ENCODE measurements at regions of chrX and their contacts with region 1.

Region 1: GRCh38 chrX:129925305-129926092 is 19.5 kb downstream of the UTP14A start:
- DNase-seq: peak; percentile 63 to 64
- H3K4me3 ChIP-seq: no peak overlapping the region
- H3K27ac ChIP-seq: peak overlapping the region; percentile 27
- H3K4me1 ChIP-seq: peaks cover 10% of the 10 kb centered on the region
- H3K27me3 ChIP-seq: no peaks in the 10 kb centered on the region
- CTCF ChIP-seq: peak; percentile 83

Region 2: GRCh38 chrX:129798888-129799287 is 126.6 kb before region 1 on chrX:
- CTCF ChIA-PET with region 1: no interaction called
- POLR2A ChIA-PET with region 1: no interaction called
- intact Hi-C with region 1: no loop called
- DNase-seq: no peak
- H3K4me3 ChIP-seq: no peak overlapping the region
- H3K27ac ChIP-seq: no peak overlapping the region
- H3K4me1 ChIP-seq: no peaks in the 10 kb centered on the region
- H3K27me3 ChIP-seq: no peaks in the 10 kb centered on the region
- CTCF ChIP-seq: no peak

Region 3: GRCh38 chrX:129976441-129976840 is 50.9 kb after region 1 on chrX:
- CTCF ChIA-PET with region 1: no interaction called
- POLR2A ChIA-PET with region 1: no interaction called
- intact Hi-C with region 1: no loop called
- DNase-seq: no peak
- H3K4me3 ChIP-seq: no peak overlapping the region
- H3K27ac ChIP-seq: no peak overlapping the region
- H3K4me1 ChIP-seq: no peaks in the 10 kb centered on the region
- H3K27me3 ChIP-seq: peaks cover 4% of the 10 kb centered on the region; the same call in 1 of the 2 replicates
- CTCF ChIP-seq: no peak

Region 4: DNA sequence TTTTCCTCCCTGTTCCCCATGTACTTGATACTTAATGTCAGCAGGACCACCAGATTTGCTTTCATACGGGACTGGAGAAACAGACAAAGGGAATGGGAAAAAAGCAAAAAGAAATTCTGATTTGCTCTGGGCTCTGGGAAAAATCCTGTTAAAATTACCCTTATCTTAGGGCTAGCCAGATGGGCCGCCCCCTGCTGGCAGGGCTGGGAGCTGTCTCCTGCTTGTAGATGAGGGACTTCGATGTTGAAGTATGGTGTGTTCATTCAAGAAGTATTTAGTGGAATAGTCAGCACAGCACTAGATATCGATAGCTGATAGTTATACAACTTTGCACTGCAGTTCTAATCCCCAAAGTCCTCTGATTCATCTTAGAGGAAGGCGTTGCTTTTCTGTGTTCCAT is 102.7 kb after region 1 on chrX:
- CTCF ChIA-PET with region 1: interaction called, 20 read pairs
- POLR2A ChIA-PET with region 1: no interaction called
- intact Hi-C with region 1: loop called (anchors 1 kb)
- DNase-seq: peak in 1 of 2 experiments; percentile 51
- H3K4me3 ChIP-seq: no peak overlapping the region
- H3K27ac ChIP-seq: no peak overlapping the region
- H3K4me1 ChIP-seq: no peaks in the 10 kb centered on the region
- H3K27me3 ChIP-seq: no peaks in the 10 kb centered on the region
- CTCF ChIP-seq: peak; percentile 86

Region 5: GRCh38 chrX:130186651-130187050 is 261.2 kb after region 1 on chrX:
- CTCF ChIA-PET with region 1: no interaction called
- POLR2A ChIA-PET with region 1: no interaction called
- intact Hi-C with region 1: loop called (anchors 5 kb)
- DNase-seq: no peak
- H3K4me3 ChIP-seq: no peak overlapping the region
- H3K27ac ChIP-seq: no peak overlapping the region
- H3K4me1 ChIP-seq: no peaks in the 10 kb centered on the region
- H3K27me3 ChIP-seq: no peaks in the 10 kb centered on the region; the same call in 1 of the 2 replicates
- CTCF ChIP-seq: no peak

Measured in PC-9 (cell line).